ENCODE measurements at regions of chr12 and their contacts with region 1.

Region 1: DNA sequence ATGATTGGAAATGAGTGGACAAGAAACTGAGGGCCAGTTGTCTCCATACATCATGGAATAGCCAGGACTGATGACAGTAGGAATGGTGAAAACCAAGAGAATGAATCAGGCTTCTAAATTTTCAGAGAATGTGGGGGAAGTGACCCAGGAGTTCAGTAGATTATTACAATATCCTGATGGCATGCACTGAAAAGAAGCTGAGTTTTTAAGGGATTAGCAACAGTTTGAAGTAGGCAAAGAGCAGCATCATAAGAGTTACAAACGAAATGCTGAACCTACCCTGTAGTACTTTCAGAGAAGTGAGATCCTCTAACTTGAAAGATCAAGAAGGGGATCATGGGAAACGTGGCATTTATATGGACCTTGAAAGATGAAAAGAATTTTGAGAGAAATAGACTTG is 13.2 kb downstream of the SLC2A14 start:
- DNase-seq: no peak
- H3K4me3 Mint-ChIP-seq: no peak overlapping the region
- H3K27ac Mint-ChIP-seq: peak overlapping the region; percentile 20
- H3K4me1 Mint-ChIP-seq: peaks cover 15% of the 10 kb centered on the region
- H3K27me3 Mint-ChIP-seq: no peaks in the 10 kb centered on the region
- CTCF ChIP-seq: no peak

Region 2: DNA sequence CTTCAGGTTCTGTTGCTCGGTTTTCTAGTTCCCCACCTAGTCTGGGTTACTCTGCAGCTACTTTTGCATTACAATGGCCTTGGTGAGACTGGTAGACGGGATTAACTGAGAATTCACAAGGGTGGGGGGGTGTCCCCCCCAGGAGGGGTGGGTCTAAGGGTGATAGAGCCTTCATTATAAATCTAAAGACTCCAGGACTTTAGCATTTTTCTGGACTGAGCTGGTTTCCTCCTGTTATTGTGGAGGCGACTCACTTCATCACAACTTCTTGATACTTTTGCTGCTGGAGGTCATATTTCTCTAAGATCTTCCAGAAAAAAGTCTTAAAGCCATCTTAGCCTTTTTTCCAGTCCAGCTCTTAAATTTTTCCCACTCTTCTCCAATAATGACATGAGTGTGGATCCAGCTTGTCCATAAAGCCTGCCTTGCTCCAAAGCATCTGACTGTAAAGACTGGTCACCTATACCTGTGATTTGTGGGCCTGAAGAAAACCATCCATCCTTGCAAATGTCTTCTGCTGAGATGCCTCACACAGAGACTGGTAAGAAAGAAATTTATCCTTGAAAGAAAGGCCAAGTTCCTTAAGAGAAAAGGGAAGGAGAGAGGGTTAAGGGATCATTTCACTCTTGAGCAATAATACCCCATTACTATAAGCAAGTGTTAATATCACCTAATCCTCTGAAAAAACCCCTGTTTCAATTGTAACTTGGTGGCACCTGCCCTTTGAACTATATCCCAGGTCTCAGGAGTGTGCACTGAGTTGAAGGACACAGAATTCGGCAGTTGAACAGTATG is 32.8 kb after region 1 on chr12:
- CTCF ChIA-PET with region 1: interaction called, 3 read pairs
- POLR2A ChIA-PET with region 1: no interaction called
- intact Hi-C with region 1: loop called (anchors 2 kb)
- DNase-seq: no peak
- H3K4me3 Mint-ChIP-seq: peak overlapping the region; percentile 22
- H3K27ac Mint-ChIP-seq: no peak overlapping the region
- H3K4me1 Mint-ChIP-seq: peaks cover 13% of the 10 kb centered on the region
- H3K27me3 Mint-ChIP-seq: no peaks in the 10 kb centered on the region
- CTCF ChIP-seq: no peak

Region 3: DNA sequence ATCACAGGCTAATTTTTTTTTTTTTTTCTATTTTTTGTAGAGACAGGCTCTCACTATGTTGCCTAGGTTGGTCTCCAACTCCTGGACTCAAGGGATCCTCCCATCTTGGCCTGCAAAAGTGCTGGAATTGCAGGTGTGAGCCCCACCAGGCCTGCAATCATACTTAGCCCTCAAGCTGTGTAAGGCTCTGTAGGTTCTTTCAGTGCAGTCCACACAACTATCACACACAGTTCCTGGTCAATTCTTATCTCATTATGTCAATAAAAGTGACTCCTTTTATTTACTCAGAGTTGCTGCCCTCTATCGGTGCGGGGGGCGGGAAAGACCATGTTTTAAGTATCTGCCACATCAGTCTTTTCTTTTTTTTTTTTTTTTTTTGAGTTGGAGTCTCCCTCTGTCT is 47.5 kb after region 1 on chr12:
- CTCF ChIA-PET with region 1: interaction called, 8 read pairs
- POLR2A ChIA-PET with region 1: no interaction called
- intact Hi-C with region 1: loop called (anchors 1 kb)
- DNase-seq: peak; percentile 61
- H3K4me3 Mint-ChIP-seq: no peak overlapping the region
- H3K27ac Mint-ChIP-seq: no peak overlapping the region
- H3K4me1 Mint-ChIP-seq: no peaks in the 10 kb centered on the region
- H3K27me3 Mint-ChIP-seq: no peaks in the 10 kb centered on the region
- CTCF ChIP-seq: peak; percentile 17

Region 4: DNA sequence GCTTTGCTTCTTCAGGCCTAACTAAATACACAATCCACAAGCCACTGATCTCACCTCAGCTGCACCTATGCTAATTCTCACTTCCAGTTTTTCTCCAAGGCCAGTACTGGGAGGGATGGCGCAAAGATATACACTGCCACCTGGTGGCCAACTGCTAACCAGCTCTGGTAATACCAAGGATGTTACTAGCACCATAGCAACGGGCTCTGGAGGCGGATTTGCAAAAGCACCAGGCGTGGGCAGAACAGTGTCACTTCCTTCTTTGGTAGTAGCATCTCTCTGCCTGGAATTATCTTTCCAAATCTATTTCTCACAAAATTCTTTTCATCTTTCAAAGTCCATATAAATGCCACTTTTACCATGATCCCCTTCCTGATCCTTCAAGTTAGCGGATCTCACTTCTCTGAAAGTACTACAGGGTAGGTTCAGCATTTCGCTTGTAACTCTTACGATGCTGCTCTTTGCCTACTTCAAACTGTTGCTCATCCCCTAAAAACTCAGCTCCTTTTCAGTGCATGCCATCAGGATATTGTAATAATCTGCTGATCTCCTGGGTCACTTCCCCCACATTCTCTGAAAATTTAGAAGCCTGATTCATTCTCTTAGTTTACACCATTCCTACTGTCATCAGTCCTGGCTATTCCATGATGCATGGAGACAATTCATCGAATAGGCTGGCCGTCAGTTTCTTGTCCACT is 135.9 kb after region 1 on chr12:
- CTCF ChIA-PET with region 1: interaction called, 36 read pairs
- POLR2A ChIA-PET with region 1: interaction called, 3 read pairs
- intact Hi-C with region 1: loop called (anchors 1 kb)
- DNase-seq: peak; percentile 77
- H3K4me3 Mint-ChIP-seq: no peak overlapping the region
- H3K27ac Mint-ChIP-seq: no peak overlapping the region
- H3K4me1 Mint-ChIP-seq: no peaks in the 10 kb centered on the region
- H3K27me3 Mint-ChIP-seq: no peaks in the 10 kb centered on the region
- CTCF ChIP-seq: peak; percentile 69

Measured in MCF 10A (cell line).